Activated naive CD4-positive, alpha-beta T cell treated with anti-CD3 and anti-CD28 coated beads, Interleukin-2, amount 10 ng/mL, durations not matched to agents 7 days and 5 days (primary cell): ENCODE measurements at regions of chr6 and their contacts with region 1.

Region 1: GRCh38 chr6:159463119-159463829 is 229.8 kb downstream of the SOD2 start:
- DNase-seq: no peak
- H3K4me3 Mint-ChIP-seq: no peak overlapping the region
- H3K27ac Mint-ChIP-seq: no peak overlapping the region
- H3K4me1 Mint-ChIP-seq: no peaks in the 10 kb centered on the region
- H3K27me3 Mint-ChIP-seq: peaks cover 16% of the 10 kb centered on the region

Region 2: GRCh38 chr6:159252955-159253508 is 210.2 kb before region 1 on chr6:
- CTCF ChIA-PET with region 1: interaction called, 10 read pairs
- DNase-seq: no peak
- H3K4me3 Mint-ChIP-seq: no peak overlapping the region
- H3K27ac Mint-ChIP-seq: no peak overlapping the region
- H3K4me1 Mint-ChIP-seq: no peaks in the 10 kb centered on the region
- H3K27me3 Mint-ChIP-seq: peaks cover 4% of the 10 kb centered on the region

Region 3: GRCh38 chr6:160110586-160111123 is 647.4 kb after region 1 on chr6:
- CTCF ChIA-PET with region 1: no interaction called
- DNase-seq: no peak
- H3K4me3 Mint-ChIP-seq: no peak overlapping the region
- H3K27ac Mint-ChIP-seq: no peak overlapping the region
- H3K4me1 Mint-ChIP-seq: peaks cover 23% of the 10 kb centered on the region
- H3K27me3 Mint-ChIP-seq: no peaks in the 10 kb centered on the region